Aorta (tissue), 5 donors: ENCODE measurements at regions of chr19 and their contacts with region 1.

Region 1: GRCh38 chr19:12551060-12551832 is at the start of gene ZNF564:
- DNase-seq: peak; percentile 94 to 97
- ATAC-seq: peak; percentile 99
- H3K4me3 ChIP-seq: peak within 1 kb of the TSS; percentile 44 to 61
- H3K27ac ChIP-seq: peak within 1 kb of the TSS; percentile 31 to 81
- H3K4me1 ChIP-seq: no peaks in the 10 kb centered on the region
- H3K27me3 ChIP-seq: no peaks in the 10 kb centered on the region
- total RNA-seq, gene ZNF564: 12.0 to 15.4 TPM

Region 2: GRCh38 chr19:12495002-12495802 is 56.0 kb before region 1 on chr19:
- intact Hi-C with region 1: loop called in 1 of 2 experiments (anchors 2 kb)
- DNase-seq: peak; percentile 94 to 98
- ATAC-seq: peak; percentile 99
- H3K4me3 ChIP-seq: peak overlapping the region; percentile 16 to 77
- H3K27ac ChIP-seq: peak overlapping the region; percentile 34 to 46
- H3K4me1 ChIP-seq: no peaks in the 10 kb centered on the region
- H3K27me3 ChIP-seq: no peaks in the 10 kb centered on the region

Region 3: DNA sequence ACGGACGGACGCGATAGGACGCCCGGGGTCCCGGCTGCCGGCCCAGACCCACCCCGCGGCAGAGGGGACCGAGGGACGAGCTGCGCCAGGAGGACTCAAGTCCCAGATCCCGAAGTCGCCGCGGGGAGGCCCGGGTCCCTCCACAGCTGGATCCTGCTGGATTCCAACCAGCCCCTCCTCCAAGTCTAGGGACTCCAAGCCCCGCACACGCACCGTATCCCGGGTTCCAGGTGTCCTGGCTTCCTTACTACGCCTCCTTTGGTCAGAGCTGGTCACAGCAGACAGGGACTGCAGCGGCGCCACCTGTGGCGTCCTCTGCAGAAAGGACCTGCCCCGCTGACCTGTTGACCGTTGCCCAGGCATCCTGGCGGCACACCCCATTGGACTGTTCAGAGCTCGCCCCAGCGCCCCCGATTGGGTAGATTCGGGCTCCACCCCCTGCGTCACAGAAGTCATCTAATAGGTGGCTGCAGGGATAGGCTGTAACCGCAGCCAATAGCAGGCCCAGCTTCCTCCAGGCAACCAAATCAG is 37.6 kb before region 1 on chr19:
- intact Hi-C with region 1: no loop called
- DNase-seq: no peak
- ATAC-seq: peak; percentile 38
- H3K4me3 ChIP-seq: no peak overlapping the region
- H3K27ac ChIP-seq: no peak overlapping the region
- H3K4me1 ChIP-seq: no peaks in the 10 kb centered on the region
- H3K27me3 ChIP-seq: no peaks in the 10 kb centered on the region

Region 4: GRCh38 chr19:12610540-12611360 is 59.5 kb after region 1 on chr19 and contains the starts of genes ZNF490 and ZNF791:
- intact Hi-C with region 1: loop called in 1 of 2 experiments (anchors 1 kb)
- DNase-seq: peak; percentile 99
- ATAC-seq: peak; percentile 99
- H3K4me3 ChIP-seq: peak within 1 kb of the TSS; percentile 78 to 92
- H3K27ac ChIP-seq: peak within 1 kb of the TSS; percentile 96 to 99
- H3K4me1 ChIP-seq: no peaks in the 10 kb centered on the region
- H3K27me3 ChIP-seq: no peaks in the 10 kb centered on the region
- total RNA-seq, gene ZNF490: 7.0 to 8.6 TPM
- total RNA-seq, gene ZNF791: 35.2 to 35.4 TPM

Region 5: GRCh38 chr19:12623361-12624022 is 72.2 kb after region 1 on chr19:
- intact Hi-C with region 1: no loop called
- DNase-seq: no peak
- ATAC-seq: no peak
- H3K4me3 ChIP-seq: no peak overlapping the region
- H3K27ac ChIP-seq: no peak overlapping the region
- H3K4me1 ChIP-seq: no peaks in the 10 kb centered on the region
- H3K27me3 ChIP-seq: no peaks in the 10 kb centered on the region

Region 6: GRCh38 chr19:12666265-12667048 is 115.2 kb after region 1 on chr19 and contains the starts of genes MAN2B1 and WDR83:
- intact Hi-C with region 1: loop called in 1 of 2 experiments (anchors 5 kb)
- DNase-seq: peak; percentile 82 to 91
- ATAC-seq: peak; percentile 88
- H3K4me3 ChIP-seq: peak within 1 kb of the TSS; percentile 44 to 68
- H3K27ac ChIP-seq: no peak within 1 kb of the TSS
- H3K4me1 ChIP-seq: no peaks in the 10 kb centered on the region
- H3K27me3 ChIP-seq: no peaks in the 10 kb centered on the region
- total RNA-seq, gene MAN2B1: 74.8 to 111 TPM
- total RNA-seq, gene WDR83: 7.1 to 11.8 TPM